ENCODE measurements at regions of chr1 and their contacts with region 1.

Region 1: GRCh38 chr1:115184951-115185331 is 95.6 kb upstream of the TSPAN2 start:
- DNase-seq: no peak
- H3K4me3 Mint-ChIP-seq: no peak overlapping the region
- H3K27ac Mint-ChIP-seq: peak overlapping the region; percentile 61
- H3K4me1 Mint-ChIP-seq: peaks cover 10% of the 10 kb centered on the region
- H3K27me3 Mint-ChIP-seq: no peaks in the 10 kb centered on the region

Region 2: DNA sequence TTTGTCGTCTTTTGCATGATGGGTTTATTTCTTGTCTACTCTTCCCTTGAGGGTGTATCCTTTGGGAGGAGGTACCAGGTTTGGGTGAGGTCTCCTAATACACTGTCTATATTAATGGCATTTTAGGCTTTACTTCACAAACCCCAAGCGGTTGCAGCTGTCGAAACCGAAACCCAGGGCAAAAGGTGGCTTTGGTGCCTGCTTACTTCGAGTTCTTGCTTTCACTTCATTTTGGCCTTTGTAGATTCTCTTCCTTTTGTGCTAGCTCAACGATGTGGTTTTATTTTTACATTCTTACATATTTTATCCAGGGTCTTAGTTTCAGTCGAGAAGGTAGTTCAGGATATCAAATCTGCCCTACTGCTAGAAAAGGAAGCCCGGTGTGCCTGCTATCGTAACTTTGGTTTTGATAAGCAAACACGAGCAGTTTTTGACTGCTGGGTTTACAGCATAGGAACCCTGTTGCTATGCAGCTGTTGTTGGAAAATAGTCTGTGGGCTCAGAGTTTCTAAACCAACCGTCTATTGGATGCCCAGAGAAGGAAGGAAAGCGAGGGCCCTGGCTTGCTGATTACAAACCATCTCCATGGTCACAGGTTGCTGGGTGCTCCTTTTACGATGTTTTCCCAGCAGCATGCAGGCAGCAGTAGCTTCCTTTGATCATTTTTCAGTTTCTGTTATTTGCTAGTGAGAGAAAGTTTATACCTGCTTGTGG is 85.8 kb before region 1 on chr1:
- CTCF ChIA-PET with region 1: no interaction called
- POLR2A ChIA-PET with region 1: no interaction called
- intact Hi-C with region 1: loop called (anchors 2 kb)
- DNase-seq: peak; percentile 78
- H3K4me3 Mint-ChIP-seq: peak overlapping the region; percentile 80
- H3K27ac Mint-ChIP-seq: peak overlapping the region; percentile 85
- H3K4me1 Mint-ChIP-seq: peaks cover 47% of the 10 kb centered on the region
- H3K27me3 Mint-ChIP-seq: no peaks in the 10 kb centered on the region

Measured in activated CD4-positive, alpha-beta memory T cell treated with anti-CD3 and anti-CD28 coated beads for 36 hours (primary cell).